Caco-2 (cell line): ENCODE measurements at regions of chr7 and their contacts with region 1.

Region 1: DNA sequence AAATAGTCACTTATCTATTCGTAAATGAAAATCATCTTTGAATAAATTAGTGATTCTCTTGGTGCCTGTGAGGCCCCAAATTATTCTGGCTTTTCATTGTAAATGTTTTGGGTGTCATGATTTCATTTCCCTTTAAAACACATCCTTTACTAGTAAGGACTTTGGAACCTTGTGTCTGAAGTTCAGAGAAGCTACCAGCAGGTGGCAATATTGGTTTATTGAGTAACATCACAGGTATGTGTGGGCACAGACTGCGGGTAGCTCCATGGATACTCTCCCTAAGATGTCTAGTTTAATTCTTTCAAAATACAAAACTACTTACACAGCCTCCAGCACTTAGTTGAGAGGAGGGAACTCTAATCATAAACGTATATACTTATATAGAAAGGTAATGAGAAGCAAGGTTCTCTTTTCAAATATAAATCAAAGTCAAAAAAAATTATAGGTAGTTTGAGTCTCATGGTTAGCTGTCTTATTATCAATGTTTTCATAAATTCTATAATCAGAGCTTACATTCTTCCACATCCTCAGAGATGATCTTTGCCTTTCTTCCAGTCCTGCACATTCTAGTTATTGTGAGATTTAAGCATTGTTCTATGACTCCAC is 449.6 kb downstream of the GRM8 start:
- DNase-seq: peak; percentile 64 to 69
- H3K4me3 ChIP-seq: no peak overlapping the region
- H3K4me3 Mint-ChIP-seq: no peak overlapping the region
- H3K27ac Mint-ChIP-seq: no peak overlapping the region
- H3K4me1 ChIP-seq: no peaks in the 10 kb centered on the region
- H3K4me1 Mint-ChIP-seq: peaks cover 5% of the 10 kb centered on the region
- H3K27me3 ChIP-seq: no peaks in the 10 kb centered on the region
- H3K27me3 Mint-ChIP-seq: no peaks in the 10 kb centered on the region
- CTCF ChIP-seq: peak; percentile 79 to 80

Region 2: DNA sequence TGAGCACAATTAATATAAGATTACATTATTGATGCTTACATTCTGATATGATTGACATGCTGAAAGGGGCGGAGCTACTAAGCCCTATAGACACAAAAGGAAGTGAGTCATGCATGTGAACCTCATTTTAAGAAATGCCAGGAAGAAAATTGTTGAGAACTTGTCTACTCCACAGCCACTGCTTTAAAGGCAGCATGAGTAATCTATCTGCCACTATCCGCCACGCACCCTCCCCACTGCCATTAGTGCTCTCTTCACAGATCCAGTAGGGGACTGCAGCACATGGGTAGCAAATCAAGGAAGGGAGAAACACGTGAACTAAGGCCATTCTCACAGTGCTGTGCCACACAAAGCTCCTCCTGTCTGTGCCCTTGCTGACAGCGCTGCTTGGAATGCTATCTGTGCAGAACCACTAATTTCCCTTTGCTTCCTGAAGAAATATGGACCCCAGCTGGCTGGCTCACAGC is 75.2 kb before region 1 on chr7:
- CTCF ChIA-PET with region 1: no interaction called
- POLR2A ChIA-PET with region 1: no interaction called
- intact Hi-C with region 1: no loop called
- DNase-seq: no peak
- H3K4me3 ChIP-seq: no peak overlapping the region
- H3K4me3 Mint-ChIP-seq: no peak overlapping the region
- H3K27ac Mint-ChIP-seq: no peak overlapping the region
- H3K4me1 ChIP-seq: no peaks in the 10 kb centered on the region
- H3K4me1 Mint-ChIP-seq: no peaks in the 10 kb centered on the region
- H3K27me3 ChIP-seq: no peaks in the 10 kb centered on the region
- H3K27me3 Mint-ChIP-seq: no peaks in the 10 kb centered on the region
- CTCF ChIP-seq: no peak

Region 3: GRCh38 chr7:126760914-126761577 is 42.1 kb before region 1 on chr7:
- CTCF ChIA-PET with region 1: no interaction called
- POLR2A ChIA-PET with region 1: no interaction called
- intact Hi-C with region 1: no loop called
- DNase-seq: no peak
- H3K4me3 ChIP-seq: no peak overlapping the region
- H3K4me3 Mint-ChIP-seq: no peak overlapping the region
- H3K27ac Mint-ChIP-seq: no peak overlapping the region
- H3K4me1 ChIP-seq: no peaks in the 10 kb centered on the region
- H3K4me1 Mint-ChIP-seq: no peaks in the 10 kb centered on the region
- H3K27me3 ChIP-seq: no peaks in the 10 kb centered on the region
- H3K27me3 Mint-ChIP-seq: peaks cover 4% of the 10 kb centered on the region
- CTCF ChIP-seq: no peak

Region 4: GRCh38 chr7:126818393-126819196 is 15.4 kb after region 1 on chr7:
- CTCF ChIA-PET with region 1: no interaction called
- POLR2A ChIA-PET with region 1: no interaction called
- intact Hi-C with region 1: no loop called
- DNase-seq: no peak
- H3K4me3 ChIP-seq: no peak overlapping the region
- H3K4me3 Mint-ChIP-seq: no peak overlapping the region
- H3K27ac Mint-ChIP-seq: no peak overlapping the region
- H3K4me1 ChIP-seq: no peaks in the 10 kb centered on the region
- H3K4me1 Mint-ChIP-seq: no peaks in the 10 kb centered on the region
- H3K27me3 ChIP-seq: no peaks in the 10 kb centered on the region
- H3K27me3 Mint-ChIP-seq: peaks cover 5% of the 10 kb centered on the region
- CTCF ChIP-seq: no peak

Region 5: DNA sequence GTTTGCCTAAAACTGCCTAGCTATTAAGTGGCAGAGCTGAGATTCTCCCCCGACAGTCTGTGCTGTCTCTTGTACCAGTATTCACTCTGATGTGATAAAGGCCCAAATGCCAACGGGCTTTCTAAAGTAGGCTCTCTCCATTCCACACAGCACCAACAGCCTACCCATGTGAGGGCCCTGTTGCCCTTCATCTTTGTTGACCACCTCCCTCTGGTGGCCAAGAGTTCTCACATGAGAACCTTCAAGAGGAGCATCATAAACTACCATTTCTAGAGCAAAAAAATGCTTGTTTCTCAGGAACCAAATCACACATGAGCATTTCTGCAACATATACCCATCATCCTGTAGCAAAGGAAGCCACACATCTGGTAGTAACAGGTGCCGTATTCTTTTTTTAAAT is 263.8 kb after region 1 on chr7:
- CTCF ChIA-PET with region 1: interaction called, 4 read pairs
- POLR2A ChIA-PET with region 1: no interaction called
- intact Hi-C with region 1: loop called (anchors 1 kb)
- DNase-seq: peak; percentile 32 to 40
- H3K4me3 ChIP-seq: no peak overlapping the region
- H3K4me3 Mint-ChIP-seq: no peak overlapping the region
- H3K27ac Mint-ChIP-seq: no peak overlapping the region
- H3K4me1 ChIP-seq: no peaks in the 10 kb centered on the region
- H3K4me1 Mint-ChIP-seq: no peaks in the 10 kb centered on the region
- H3K27me3 ChIP-seq: no peaks in the 10 kb centered on the region
- H3K27me3 Mint-ChIP-seq: peaks cover 5% of the 10 kb centered on the region
- CTCF ChIP-seq: peak in 1 of 2 experiments; percentile 30

Region 6: DNA sequence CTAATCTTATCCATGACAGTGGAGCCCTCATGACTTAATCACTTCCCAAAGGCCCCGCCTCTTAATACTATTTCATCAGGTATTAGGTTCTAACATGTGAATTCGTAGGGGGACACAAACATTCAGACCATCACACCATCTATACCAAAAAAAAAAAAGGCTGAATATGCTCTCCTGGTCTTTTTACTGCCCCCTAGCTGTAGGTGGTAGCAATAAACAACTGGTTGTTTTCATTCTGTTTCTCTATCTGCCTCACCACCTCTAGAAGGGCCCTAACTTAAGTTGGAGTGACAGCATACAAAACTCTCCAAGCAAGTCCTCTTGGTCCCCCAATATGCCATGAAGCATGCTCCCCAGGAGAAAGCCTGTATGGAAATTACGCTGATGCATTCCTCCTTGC is 355.5 kb after region 1 on chr7:
- CTCF ChIA-PET with region 1: no interaction called
- POLR2A ChIA-PET with region 1: no interaction called
- intact Hi-C with region 1: loop called (anchors 10 kb)
- DNase-seq: no peak
- H3K4me3 ChIP-seq: no peak overlapping the region
- H3K4me3 Mint-ChIP-seq: no peak overlapping the region
- H3K27ac Mint-ChIP-seq: no peak overlapping the region
- H3K4me1 ChIP-seq: no peaks in the 10 kb centered on the region
- H3K4me1 Mint-ChIP-seq: no peaks in the 10 kb centered on the region
- H3K27me3 ChIP-seq: no peaks in the 10 kb centered on the region; the same call in 1 of the 2 replicates
- H3K27me3 Mint-ChIP-seq: peaks cover 14% of the 10 kb centered on the region
- CTCF ChIP-seq: peak; percentile 13 to 19

Region 7: GRCh38 chr7:127253281-127254162 is 450.4 kb after region 1 on chr7:
- CTCF ChIA-PET with region 1: interaction called, 13 read pairs
- POLR2A ChIA-PET with region 1: no interaction called
- intact Hi-C with region 1: loop called (anchors 1 kb)
- DNase-seq: peak; percentile 45 to 73
- H3K4me3 ChIP-seq: peak overlapping the region; percentile 51
- H3K4me3 Mint-ChIP-seq: peak overlapping the region; percentile 61
- H3K27ac Mint-ChIP-seq: no peak overlapping the region
- H3K4me1 ChIP-seq: peaks cover 8% of the 10 kb centered on the region; the same call in 1 of the 2 replicates
- H3K4me1 Mint-ChIP-seq: no peaks in the 10 kb centered on the region
- H3K27me3 ChIP-seq: peaks cover 12% of the 10 kb centered on the region
- H3K27me3 Mint-ChIP-seq: peaks cover 39% of the 10 kb centered on the region
- CTCF ChIP-seq: peak; percentile 87 to 88

Region 8: DNA sequence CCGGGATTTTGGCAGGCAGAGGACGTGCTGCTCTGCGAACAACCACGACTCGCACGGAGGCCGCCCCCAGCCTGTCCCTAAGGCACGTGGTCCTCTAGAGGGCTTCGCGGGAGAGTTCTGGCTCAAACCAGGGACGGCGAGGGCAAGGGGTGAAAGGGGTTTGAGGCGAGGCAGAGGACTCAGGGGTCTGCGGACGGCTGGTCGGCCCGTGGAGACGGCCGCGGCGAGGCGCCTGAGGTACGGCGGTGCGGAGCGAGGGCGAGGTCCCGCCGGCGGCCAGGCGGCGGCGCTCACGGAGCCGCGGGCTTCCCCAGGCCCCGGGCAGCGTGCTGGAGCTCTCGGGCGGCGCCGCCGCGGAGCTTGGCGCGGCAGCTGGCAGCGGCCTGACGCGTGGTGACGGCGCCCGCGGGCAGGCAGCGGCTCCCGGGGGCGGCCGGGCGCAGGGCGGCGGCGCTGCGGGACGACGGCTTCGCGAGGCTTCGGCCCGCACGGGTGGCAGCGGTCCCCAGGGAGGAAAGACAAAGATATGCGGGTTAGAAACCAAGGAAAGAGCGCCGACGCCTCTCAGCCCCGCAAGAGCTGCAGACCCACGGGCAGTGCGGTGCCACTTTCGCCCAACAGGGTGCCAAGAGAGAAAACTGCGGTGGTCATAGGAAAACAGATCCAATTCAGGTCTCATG is 544.5 kb after region 1 on chr7:
- CTCF ChIA-PET with region 1: no interaction called
- POLR2A ChIA-PET with region 1: no interaction called
- intact Hi-C with region 1: loop called (anchors 10 kb)
- DNase-seq: peak; percentile 54 to 82
- H3K4me3 ChIP-seq: peak overlapping the region; percentile 31
- H3K4me3 Mint-ChIP-seq: peak overlapping the region; percentile 64
- H3K27ac Mint-ChIP-seq: no peak overlapping the region
- H3K4me1 ChIP-seq: no peaks in the 10 kb centered on the region
- H3K4me1 Mint-ChIP-seq: no peaks in the 10 kb centered on the region
- H3K27me3 ChIP-seq: no peaks in the 10 kb centered on the region
- H3K27me3 Mint-ChIP-seq: peaks cover 13% of the 10 kb centered on the region
- CTCF ChIP-seq: peak; percentile 6 to 13

Region 9: GRCh38 chr7:127514499-127514898 is 711.3 kb after region 1 on chr7:
- CTCF ChIA-PET with region 1: no interaction called
- POLR2A ChIA-PET with region 1: no interaction called
- intact Hi-C with region 1: loop called (anchors 1 kb)
- DNase-seq: peak in 1 of 2 experiments; percentile 36
- H3K4me3 ChIP-seq: no peak overlapping the region
- H3K4me3 Mint-ChIP-seq: no peak overlapping the region
- H3K27ac Mint-ChIP-seq: no peak overlapping the region
- H3K4me1 ChIP-seq: no peaks in the 10 kb centered on the region
- H3K4me1 Mint-ChIP-seq: no peaks in the 10 kb centered on the region
- H3K27me3 ChIP-seq: no peaks in the 10 kb centered on the region
- H3K27me3 Mint-ChIP-seq: peaks cover 19% of the 10 kb centered on the region
- CTCF ChIP-seq: peak; percentile 39 to 50